ENCODE measurements at regions of chr2 and their contacts with region 1.

Region 1: GRCh38 chr2:206556357-206556949 is 85.8 kb upstream of the FAM237A start:
- DNase-seq: no peak
- ATAC-seq: peak; percentile 63

Region 2: GRCh38 chr2:206392118-206392517 is 164.3 kb before region 1 on chr2:
- intact Hi-C with region 1: loop called (anchors 5 kb)
- DNase-seq: no peak
- ATAC-seq: peak; percentile 66